Dorsolateral prefrontal cortex (tissue), 120 donors: ENCODE measurements at regions of chr21 and their contacts with region 1.

Region 1: GRCh38 chr21:41068967-41069642 is 98.9 kb upstream of the BACE2 start:
- DNase-seq: peak; percentile 81 to 92 (median 88)
- H3K4me3 ChIP-seq: peak overlapping the region; percentile 6 to 69 (median 50)
- H3K27ac ChIP-seq: peak overlapping the region in 50 of 59 donors; percentile 10 to 86 (median 70)
- H3K27me3 ChIP-seq: peaks cover 0 to 22% (median 0%) of the 10 kb centered on the region in 45 donors
- CTCF ChIP-seq: peak; percentile 61 to 97 (median 92)

Region 2: GRCh38 chr21:40143822-40144525 is 925.1 kb before region 1 on chr21:
- intact Hi-C with region 1: loop called (anchors 5 to 10 kb)
- DNase-seq: peak in 9 of 10 donors; percentile 45 to 81 (median 68)
- H3K4me3 ChIP-seq: no peak overlapping the region
- H3K27ac ChIP-seq: no peak overlapping the region
- H3K27me3 ChIP-seq: peaks cover 0 to 10% (median 0%) of the 10 kb centered on the region in 45 donors
- CTCF ChIP-seq: peak; percentile 72 to 98 (median 87)

Region 3: GRCh38 chr21:40466893-40467501 is 602.1 kb before region 1 on chr21:
- intact Hi-C with region 1: loop called in 1 of 2 experiments (anchors 2 kb)
- DNase-seq: peak in 2 of 10 donors; percentile 13 to 24
- H3K4me3 ChIP-seq: no peak overlapping the region
- H3K27ac ChIP-seq: no peak overlapping the region
- H3K27me3 ChIP-seq: peaks cover 0 to 6% (median 0%) of the 10 kb centered on the region in 45 donors
- CTCF ChIP-seq: peak; percentile 37 to 74 (median 59)

Region 4: DNA sequence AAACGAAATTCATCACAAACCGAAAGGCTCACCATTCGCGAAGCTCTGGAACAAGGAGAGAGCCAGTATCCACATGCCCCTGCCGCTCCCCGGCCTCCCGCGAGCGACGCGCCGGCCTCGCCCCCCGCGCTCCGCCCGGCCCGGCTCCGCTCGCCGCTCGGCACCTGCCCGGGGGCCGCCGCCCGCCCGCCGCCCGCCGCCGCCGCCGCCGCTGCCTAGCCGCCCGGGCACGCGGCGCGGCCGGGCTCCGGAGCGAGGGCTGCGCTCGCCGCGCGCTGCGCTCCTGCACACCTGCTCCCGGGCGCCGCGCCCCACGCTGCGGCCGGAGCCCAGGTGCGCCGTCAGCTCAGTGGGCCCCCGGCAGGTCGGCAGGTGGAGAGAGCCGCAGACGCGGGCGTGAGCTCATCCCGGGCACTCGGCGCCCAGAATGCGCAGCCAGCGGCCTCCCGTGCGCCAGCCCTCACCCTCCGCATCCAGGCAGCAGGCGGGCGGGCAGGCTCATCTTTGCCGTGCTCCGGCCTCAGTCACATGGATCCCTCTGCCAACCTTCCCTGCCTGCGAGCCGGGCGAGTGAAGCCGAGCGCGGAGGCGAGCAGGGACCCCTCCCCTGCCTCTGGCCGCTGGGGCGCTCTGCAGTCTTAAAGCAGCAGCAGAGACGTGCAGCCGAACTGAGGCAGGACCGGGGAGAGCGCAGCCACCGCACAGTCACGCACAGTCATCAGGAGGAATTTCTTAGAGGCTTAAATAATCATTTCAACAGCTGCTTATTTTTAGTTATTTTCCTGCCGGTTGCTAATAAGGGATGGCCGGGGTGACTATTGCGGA is 222.3 kb before region 1 on chr21 and contains the start of gene DSCAM:
- intact Hi-C with region 1: loop called in 1 of 2 experiments (anchors 2 kb)
- DNase-seq: peak in 7 of 10 donors; percentile 27 to 64 (median 49)
- H3K4me3 ChIP-seq: peak within 1 kb of the TSS; percentile 33 to 71 (median 55)
- H3K27ac ChIP-seq: peak within 1 kb of the TSS in 57 of 59 donors; percentile 43 to 95 (median 85)
- H3K27me3 ChIP-seq: peaks cover 0 to 62% (median 15%) of the 10 kb centered on the region in 45 donors
- CTCF ChIP-seq: peak in 1 of 56 donors; percentile 14
- total RNA-seq, gene DSCAM: 14.1 to 35.2 (median 22.3) TPM